HepG2 (cell line): ENCODE measurements at regions of chr22 and their contacts with region 1.

Region 1: DNA sequence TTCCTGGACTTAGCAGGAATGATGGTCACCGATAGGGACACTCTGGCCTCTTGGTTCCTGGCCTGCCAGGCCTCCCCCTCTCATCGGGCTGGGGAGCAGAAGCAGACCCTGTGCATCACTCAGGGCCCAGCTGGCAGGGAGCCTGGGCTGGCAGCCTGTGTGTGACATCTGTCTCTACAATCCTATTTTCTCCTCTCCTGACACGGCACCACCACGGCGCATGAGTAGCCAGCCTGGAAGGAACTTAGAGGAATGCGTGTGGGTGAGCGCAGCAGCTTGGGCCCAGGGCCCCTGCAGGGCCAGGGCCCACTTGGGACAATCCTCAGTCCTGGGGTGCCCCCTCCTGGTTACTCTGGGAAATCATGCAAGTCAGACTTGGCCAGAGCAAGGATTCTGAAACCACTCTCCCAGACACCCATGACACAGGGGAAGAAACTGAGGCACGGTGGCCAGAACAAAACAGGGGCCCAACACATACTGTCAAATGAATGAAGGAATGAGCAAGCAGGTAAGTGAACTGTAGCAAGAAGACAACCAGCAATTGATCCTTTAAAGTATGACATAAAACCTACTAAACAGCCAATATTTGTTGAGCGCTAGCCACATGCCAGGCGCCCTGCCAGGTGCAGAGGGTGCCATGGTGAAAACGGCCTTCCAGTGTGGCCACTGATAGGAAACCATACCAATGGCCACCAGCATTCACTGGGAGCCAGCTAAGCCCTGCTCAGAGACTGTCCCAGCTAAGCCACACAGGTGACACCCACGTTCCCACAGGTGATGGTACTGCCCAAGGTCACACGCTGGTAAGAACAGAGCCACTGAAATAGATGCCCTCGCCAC is 13.3 kb downstream of the RSPH14 start:
- DNase-seq: peak; percentile 59
- ATAC-seq: peak; percentile 87
- H3K4me3 ChIP-seq: no peak overlapping the region
- H3K27ac ChIP-seq: no peak overlapping the region
- H3K4me1 ChIP-seq: peaks cover 7% of the 10 kb centered on the region
- H3K27me3 ChIP-seq: no peaks in the 10 kb centered on the region
- CTCF ChIP-seq: peak; percentile 94
- EP300 ChIP-seq: no peak
- POLR2A ChIP-seq: no peak
- RAD21 ChIP-seq: peak; percentile 99

Region 2: GRCh38 chr22:22508274-22509176 is 620.0 kb before region 1 on chr22 and contains the start of gene ZNF280B:
- CTCF ChIA-PET with region 1: no interaction called
- POLR2A ChIA-PET with region 1: no interaction called
- in situ Hi-C with region 1: no loop called
- intact Hi-C with region 1: no loop called
- DNase-seq: peak; percentile 76
- ATAC-seq: peak; percentile 100
- H3K4me3 ChIP-seq: peak within 1 kb of the TSS; percentile 79 to 97 (median 87)
- H3K27ac ChIP-seq: peak within 1 kb of the TSS; percentile 44
- H3K4me1 ChIP-seq: peaks cover 16% of the 10 kb centered on the region
- H3K27me3 ChIP-seq: no peaks in the 10 kb centered on the region; a peak in 1 of 5 replicates
- CTCF ChIP-seq: peak; percentile 90
- EP300 ChIP-seq: no peak
- POLR2A ChIP-seq: peak; percentile 52 to 80; a peak in 3 of 4 replicates
- RAD21 ChIP-seq: 0 out of 2 replicates have a peak, but pooled peaks have one; percentile 26
- total RNA-seq, gene ZNF280B: 3.7 and 6.1 TPM in 2 replicates

Region 3: GRCh38 chr22:22848364-22848866 is 280.1 kb before region 1 on chr22:
- CTCF ChIA-PET with region 1: no interaction called
- POLR2A ChIA-PET with region 1: no interaction called
- in situ Hi-C with region 1: loop called (anchors 10 kb)
- intact Hi-C with region 1: no loop called
- DNase-seq: peak; percentile 50
- ATAC-seq: peak; percentile 98
- H3K4me3 ChIP-seq: no peak overlapping the region
- H3K27ac ChIP-seq: no peak overlapping the region
- H3K4me1 ChIP-seq: no peaks in the 10 kb centered on the region
- H3K27me3 ChIP-seq: peaks cover 0 to 30% of the 10 kb centered on the region in 2 experiments; a peak in 3 of 5 replicates
- CTCF ChIP-seq: peak; percentile 94
- EP300 ChIP-seq: no peak
- POLR2A ChIP-seq: no peak
- RAD21 ChIP-seq: peak; percentile 62; the same call in 1 of the 2 replicates

Region 4: DNA sequence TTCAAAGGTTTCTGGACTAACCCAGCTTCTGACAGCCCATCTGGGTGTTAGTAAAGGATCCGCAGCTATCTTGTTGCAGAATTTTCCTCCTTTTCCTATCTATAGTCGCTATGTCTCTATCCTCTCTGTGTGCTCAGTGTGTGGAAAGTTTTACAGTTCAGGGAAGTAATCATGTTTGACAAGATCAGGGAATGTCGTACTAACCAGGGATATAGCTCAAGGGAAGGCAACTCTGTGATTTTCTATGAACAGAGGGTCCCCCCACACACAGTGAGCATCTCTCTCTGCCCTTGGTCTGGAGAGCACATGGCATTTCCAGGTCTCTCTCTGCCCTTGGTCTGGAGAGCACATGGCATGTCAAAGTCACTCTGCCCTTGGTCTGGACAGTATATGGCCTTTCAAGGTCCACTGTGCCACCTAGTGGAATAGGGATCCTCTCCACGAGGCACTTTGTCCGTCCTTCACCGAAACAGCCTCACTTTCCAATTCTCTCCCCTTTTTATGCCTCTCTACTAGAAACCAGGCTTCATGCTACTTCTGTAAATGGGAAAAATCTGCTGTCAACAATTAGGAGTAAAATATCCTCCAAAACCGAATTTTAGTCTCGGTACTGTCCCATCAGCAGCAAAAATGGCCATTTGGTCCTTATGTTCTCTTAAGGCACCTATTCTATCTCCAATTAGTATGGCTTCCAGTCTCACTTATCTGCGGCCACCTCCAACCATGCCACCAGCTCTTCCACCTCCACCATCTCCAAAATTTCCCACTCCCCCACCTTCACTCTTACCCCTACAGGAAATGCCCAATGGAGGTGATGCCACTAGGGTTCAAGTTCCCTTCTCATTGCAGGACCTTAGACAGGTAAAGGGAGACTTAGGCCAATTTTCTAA is 152.2 kb before region 1 on chr22:
- CTCF ChIA-PET with region 1: no interaction called
- POLR2A ChIA-PET with region 1: no interaction called
- in situ Hi-C with region 1: no loop called
- intact Hi-C with region 1: loop called (anchors 1 kb)
- DNase-seq: peak; percentile 29
- ATAC-seq: peak; percentile 72
- H3K4me3 ChIP-seq: no peak overlapping the region
- H3K27ac ChIP-seq: no peak overlapping the region
- H3K4me1 ChIP-seq: no peaks in the 10 kb centered on the region
- H3K27me3 ChIP-seq: no peaks in the 10 kb centered on the region; a peak in 1 of 5 replicates
- CTCF ChIP-seq: peak; percentile 53
- EP300 ChIP-seq: no peak
- POLR2A ChIP-seq: no peak
- RAD21 ChIP-seq: no peak

Region 5: GRCh38 chr22:23069502-23070357 is 58.8 kb before region 1 on chr22:
- CTCF ChIA-PET with region 1: interaction called, 3 read pairs
- POLR2A ChIA-PET with region 1: no interaction called
- in situ Hi-C with region 1: no loop called
- intact Hi-C with region 1: loop called (anchors 10 kb)
- DNase-seq: peak; percentile 77
- ATAC-seq: peak; percentile 91
- H3K4me3 ChIP-seq: peak overlapping the region; percentile 67 to 85 (median 71)
- H3K27ac ChIP-seq: peak overlapping the region; percentile 65
- H3K4me1 ChIP-seq: peaks cover 55% of the 10 kb centered on the region
- H3K27me3 ChIP-seq: peaks cover 0 to 34% of the 10 kb centered on the region in 2 experiments; a peak in 3 of 5 replicates
- CTCF ChIP-seq: peak; percentile 20; the same call in 1 of the 2 replicates
- EP300 ChIP-seq: no peak
- POLR2A ChIP-seq: 0 out of 4 replicates have a peak, but pooled peaks of 1 of the 2 experiments have one; percentile 8
- RAD21 ChIP-seq: peak; percentile 41; the same call in 1 of the 2 replicates

Region 6: GRCh38 chr22:23152315-23153113 is 24.0 kb after region 1 on chr22:
- CTCF ChIA-PET with region 1: no interaction called
- POLR2A ChIA-PET with region 1: no interaction called
- in situ Hi-C with region 1: no loop called
- intact Hi-C with region 1: no loop called
- DNase-seq: peak; percentile 90
- ATAC-seq: peak; percentile 29
- H3K4me3 ChIP-seq: peak overlapping the region in 1 of 3 experiments; percentile 33; a peak in 2 of 6 replicates
- H3K27ac ChIP-seq: peak overlapping the region; percentile 79
- H3K4me1 ChIP-seq: peaks cover 97% of the 10 kb centered on the region
- H3K27me3 ChIP-seq: no peaks in the 10 kb centered on the region; a peak in 1 of 5 replicates
- CTCF ChIP-seq: no peak
- EP300 ChIP-seq: peak in 1 of 2 experiments; percentile 57; a peak in 2 of 4 replicates
- POLR2A ChIP-seq: peak; percentile 24 to 36; a peak in 1 of 4 replicates
- RAD21 ChIP-seq: no peak